ENCODE measurements at regions of chr4 and their contacts with region 1.

Region 1: DNA sequence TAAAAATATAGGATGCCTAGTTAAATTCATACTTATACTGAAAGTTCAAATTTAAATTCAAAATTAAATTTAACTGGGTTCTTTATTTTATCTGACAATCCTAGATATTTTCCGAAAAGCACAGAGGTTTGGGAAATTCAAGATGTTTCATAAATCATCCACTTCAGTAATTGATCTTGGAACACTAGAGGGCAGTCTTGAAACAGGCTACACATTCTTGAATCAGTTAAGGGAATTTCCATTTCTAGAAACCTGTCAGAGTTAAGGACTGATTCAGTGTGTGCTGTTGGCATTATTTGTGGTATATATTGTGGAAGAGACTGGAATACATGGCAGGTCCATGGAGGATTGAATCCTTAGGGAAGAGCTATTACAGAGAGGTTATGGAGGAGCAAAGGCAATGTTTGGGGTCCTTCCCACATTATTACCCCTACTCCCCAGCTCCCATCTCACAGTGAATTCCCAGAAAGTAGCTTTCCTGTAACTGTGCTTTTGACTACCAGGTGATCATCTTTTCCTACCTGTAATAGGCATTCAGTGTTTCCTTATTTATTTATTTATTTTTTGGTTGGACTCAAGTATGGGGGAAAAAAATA is 92.9 kb downstream of the EGF start:
- DNase-seq: no peak
- H3K4me3 ChIP-seq: no peak overlapping the region
- H3K27ac ChIP-seq: no peak overlapping the region
- H3K4me1 ChIP-seq: 0 out of 7 replicates have a peak, but pooled peaks cover 0 to 2% (median 0%) of the 10 kb centered on the region in 4 experiments
- H3K27me3 ChIP-seq: no peaks in the 10 kb centered on the region
- CTCF ChIP-seq: peak in 2 of 3 experiments; percentile 59 to 69; a peak in 2 of 4 replicates
- EP300 ChIP-seq: no peak
- POLR2A ChIP-seq: no peak
- RAD21 ChIP-seq: peak; percentile 88

Region 2: GRCh38 chr4:109406338-109406931 is 599.1 kb before region 1 on chr4:
- CTCF ChIA-PET with region 1: no interaction called
- POLR2A ChIA-PET with region 1: no interaction called
- DNase-seq: no peak
- H3K4me3 ChIP-seq: no peak overlapping the region
- H3K27ac ChIP-seq: no peak overlapping the region
- H3K4me1 ChIP-seq: peaks cover 0 to 7% (median under 1%) of the 10 kb centered on the region in 4 experiments; a peak in 2 of 7 replicates
- H3K27me3 ChIP-seq: no peaks in the 10 kb centered on the region
- CTCF ChIP-seq: peak in 2 of 3 experiments; percentile 53 to 76; a peak in 3 of 4 replicates
- EP300 ChIP-seq: no peak
- POLR2A ChIP-seq: no peak
- RAD21 ChIP-seq: peak; percentile 87 to 88

Region 3: GRCh38 chr4:109990261-109991257 is 15.0 kb before region 1 on chr4:
- CTCF ChIA-PET with region 1: interaction called, 10 read pairs
- POLR2A ChIA-PET with region 1: no interaction called
- DNase-seq: no peak
- H3K4me3 ChIP-seq: no peak overlapping the region
- H3K27ac ChIP-seq: no peak overlapping the region
- H3K4me1 ChIP-seq: no peaks in the 10 kb centered on the region
- H3K27me3 ChIP-seq: no peaks in the 10 kb centered on the region
- CTCF ChIP-seq: no peak
- EP300 ChIP-seq: no peak
- POLR2A ChIP-seq: no peak
- RAD21 ChIP-seq: no peak

Region 4: GRCh38 chr4:110020139-110020538 is 14.6 kb after region 1 on chr4:
- CTCF ChIA-PET with region 1: interaction called, 17 read pairs
- POLR2A ChIA-PET with region 1: no interaction called
- DNase-seq: no peak
- H3K4me3 ChIP-seq: no peak overlapping the region
- H3K27ac ChIP-seq: no peak overlapping the region
- H3K4me1 ChIP-seq: peaks cover 0 to 3% (median 0%) of the 10 kb centered on the region in 4 experiments; a peak in 2 of 7 replicates
- H3K27me3 ChIP-seq: no peaks in the 10 kb centered on the region
- CTCF ChIP-seq: no peak
- EP300 ChIP-seq: no peak
- POLR2A ChIP-seq: no peak
- RAD21 ChIP-seq: no peak

Region 5: DNA sequence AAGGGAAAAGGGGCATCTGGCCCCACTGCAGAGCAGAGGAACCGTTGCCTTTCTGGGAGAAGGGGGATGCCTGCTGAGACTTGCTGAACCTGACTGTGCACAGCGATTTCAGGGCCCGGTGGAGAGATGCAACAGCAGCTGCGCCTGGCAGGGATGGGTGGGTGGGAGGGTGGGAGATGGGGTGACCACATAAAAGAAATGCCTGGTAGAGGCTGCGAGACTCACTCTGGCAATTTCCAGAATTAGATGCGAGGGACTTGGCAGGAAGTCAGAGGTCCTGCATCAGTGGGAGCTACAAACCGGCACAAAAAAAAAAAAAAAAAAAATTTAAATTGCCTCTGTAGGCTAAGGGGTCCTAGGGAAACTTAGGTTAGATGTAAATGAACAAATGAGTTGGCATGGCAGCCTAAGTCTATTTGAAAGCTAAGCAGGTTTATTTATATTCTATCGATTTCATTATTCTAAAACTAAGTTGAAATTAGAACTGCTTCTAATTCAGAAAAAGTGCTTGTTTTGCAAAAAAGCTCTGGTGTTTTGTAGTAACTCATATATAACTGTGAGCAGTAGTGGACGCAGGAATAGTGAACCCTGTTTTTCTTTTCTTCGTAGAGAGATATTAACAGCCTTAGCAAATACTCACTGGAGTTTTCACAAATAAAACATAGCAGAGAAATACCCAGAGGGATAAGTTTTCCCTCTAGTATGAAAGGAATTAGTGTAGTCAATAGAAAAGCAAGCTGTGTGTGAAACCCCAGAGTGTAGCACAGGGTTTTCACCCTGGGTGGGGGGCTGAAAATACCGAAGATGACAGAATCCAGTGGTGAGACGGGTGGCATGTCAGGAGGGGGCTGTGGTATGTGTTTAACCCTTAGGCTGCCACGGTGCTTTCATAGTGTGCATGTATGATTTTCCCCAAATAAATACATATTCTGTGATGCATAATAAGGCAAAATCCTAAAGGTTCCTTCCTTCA is 37.3 kb after region 1 on chr4:
- CTCF ChIA-PET with region 1: interaction called, 10 read pairs
- POLR2A ChIA-PET with region 1: interaction called, 4 read pairs
- DNase-seq: no peak
- H3K4me3 ChIP-seq: no peak overlapping the region
- H3K27ac ChIP-seq: no peak overlapping the region
- H3K4me1 ChIP-seq: no peaks in the 10 kb centered on the region
- H3K27me3 ChIP-seq: no peaks in the 10 kb centered on the region
- CTCF ChIP-seq: no peak
- EP300 ChIP-seq: no peak
- POLR2A ChIP-seq: no peak
- RAD21 ChIP-seq: no peak

Region 6: GRCh38 chr4:110310795-110311194 is 305.2 kb after region 1 on chr4:
- CTCF ChIA-PET with region 1: interaction called, 10 read pairs
- POLR2A ChIA-PET with region 1: no interaction called
- DNase-seq: no peak
- H3K4me3 ChIP-seq: no peak overlapping the region
- H3K27ac ChIP-seq: no peak overlapping the region
- H3K4me1 ChIP-seq: no peaks in the 10 kb centered on the region
- H3K27me3 ChIP-seq: no peaks in the 10 kb centered on the region
- CTCF ChIP-seq: no peak
- EP300 ChIP-seq: no peak
- POLR2A ChIP-seq: no peak
- RAD21 ChIP-seq: no peak